Activated naive CD4-positive, alpha-beta T cell treated with anti-CD3 and anti-CD28 coated beads for 36 hours (primary cell): ENCODE measurements at regions of chr3 and their contacts with region 1.

Region 1: GRCh38 chr3:119637679-119638525 is 22.5 kb downstream of the POPDC2 start:
- DNase-seq: peak; percentile 19
- H3K4me3 Mint-ChIP-seq: no peak overlapping the region
- H3K27ac Mint-ChIP-seq: peak overlapping the region; percentile 91
- H3K4me1 Mint-ChIP-seq: peaks cover 36% of the 10 kb centered on the region
- H3K27me3 Mint-ChIP-seq: no peaks in the 10 kb centered on the region

Region 2: GRCh38 chr3:119293871-119294695 is 343.8 kb before region 1 on chr3 and contains the start of gene ARHGAP31:
- CTCF ChIA-PET with region 1: no interaction called
- intact Hi-C with region 1: loop called (anchors 1 kb)
- DNase-seq: peak; percentile 94
- H3K4me3 Mint-ChIP-seq: peak within 1 kb of the TSS; percentile 82
- H3K27ac Mint-ChIP-seq: peak within 1 kb of the TSS; percentile 92
- H3K4me1 Mint-ChIP-seq: peaks cover 36% of the 10 kb centered on the region
- H3K27me3 Mint-ChIP-seq: no peaks in the 10 kb centered on the region
- total RNA-seq, gene ARHGAP31: 3.5 to 3.7 TPM

Region 3: DNA sequence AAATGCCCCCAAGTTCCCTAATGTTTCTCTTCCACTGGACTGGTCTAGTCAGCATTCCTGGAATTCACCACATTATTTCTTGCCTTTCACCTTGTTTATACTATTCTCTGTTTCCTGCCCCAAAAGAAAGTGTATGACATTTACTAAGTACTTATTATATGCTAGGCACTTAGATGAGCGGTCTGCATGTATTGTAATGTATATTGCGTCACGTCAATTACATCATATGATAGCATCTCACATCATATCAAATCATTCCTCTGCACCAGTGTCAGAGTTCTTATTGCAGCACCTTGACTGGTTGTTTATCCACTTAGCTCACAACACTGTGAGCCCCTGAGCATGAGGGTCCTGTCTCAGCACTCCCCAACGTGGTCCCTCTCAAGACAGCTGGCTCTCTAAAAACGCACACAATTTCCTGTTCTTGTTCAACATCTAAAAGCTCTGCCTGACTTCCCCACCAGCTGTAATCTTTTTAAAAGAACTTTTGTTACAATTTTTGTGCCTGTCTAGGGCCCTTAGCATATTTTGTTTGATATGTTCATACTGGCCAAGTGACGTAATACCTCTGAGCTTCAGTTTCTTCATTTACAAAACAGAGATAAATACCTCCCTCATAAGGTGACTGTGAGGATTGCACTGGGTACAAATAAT is 284.9 kb before region 1 on chr3:
- CTCF ChIA-PET with region 1: no interaction called
- intact Hi-C with region 1: loop called (anchors 2 kb)
- DNase-seq: peak; percentile 13
- H3K4me3 Mint-ChIP-seq: no peak overlapping the region
- H3K27ac Mint-ChIP-seq: peak overlapping the region; percentile 43
- H3K4me1 Mint-ChIP-seq: peaks cover 30% of the 10 kb centered on the region
- H3K27me3 Mint-ChIP-seq: no peaks in the 10 kb centered on the region

Region 4: DNA sequence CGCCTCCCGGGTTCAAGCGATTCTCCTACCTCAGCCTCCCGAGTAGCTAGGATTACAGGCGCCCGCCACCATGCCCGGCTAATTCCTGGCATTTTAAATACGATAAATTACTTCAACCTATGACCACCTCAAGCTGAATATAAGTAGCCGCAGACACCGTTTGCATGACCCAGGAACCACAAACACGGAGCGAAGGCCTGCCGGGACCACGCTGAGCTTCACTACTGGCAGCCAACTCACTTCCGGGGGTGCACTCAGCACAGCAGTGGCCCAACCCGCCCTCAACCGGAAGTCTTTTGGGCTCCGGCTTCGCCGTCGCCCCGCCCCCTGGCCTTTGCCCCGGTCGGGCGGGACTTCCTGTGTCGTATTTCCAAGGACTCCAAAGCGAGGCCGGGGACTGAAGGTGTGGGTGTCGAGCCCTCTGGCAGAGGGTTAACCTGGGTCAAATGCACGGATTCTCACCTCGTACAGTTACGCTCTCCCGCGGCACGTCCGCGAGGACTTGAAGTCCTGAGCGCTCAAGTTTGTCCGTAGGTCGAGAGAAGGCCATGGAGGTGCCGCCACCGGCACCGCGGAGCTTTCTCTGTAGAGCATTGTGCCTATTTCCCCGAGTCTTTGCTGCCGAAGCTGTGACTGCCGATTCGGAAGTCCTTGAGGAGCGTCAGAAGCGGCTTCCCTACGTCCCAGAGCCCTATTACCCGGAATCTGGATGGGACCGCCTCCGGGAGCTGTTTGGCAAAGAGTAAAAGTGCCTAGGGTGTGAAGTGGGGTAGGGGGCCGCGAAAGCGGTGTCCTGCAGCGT is 139.5 kb before region 1 on chr3 and contains the start of gene TIMMDC1:
- CTCF ChIA-PET with region 1: no interaction called
- intact Hi-C with region 1: loop called (anchors 1 kb)
- DNase-seq: peak; percentile 98
- H3K4me3 Mint-ChIP-seq: peak within 1 kb of the TSS; percentile 99
- H3K27ac Mint-ChIP-seq: peak within 1 kb of the TSS; percentile 94
- H3K4me1 Mint-ChIP-seq: peaks cover 37% of the 10 kb centered on the region
- H3K27me3 Mint-ChIP-seq: no peaks in the 10 kb centered on the region
- total RNA-seq, gene TIMMDC1: 75.6 to 83.8 TPM

Region 5: GRCh38 chr3:119600732-119601131 is 37.2 kb before region 1 on chr3:
- CTCF ChIA-PET with region 1: no interaction called
- intact Hi-C with region 1: loop called (anchors 2 kb)
- DNase-seq: peak; percentile 59
- H3K4me3 Mint-ChIP-seq: no peak overlapping the region
- H3K27ac Mint-ChIP-seq: no peak overlapping the region
- H3K4me1 Mint-ChIP-seq: peaks cover 3% of the 10 kb centered on the region
- H3K27me3 Mint-ChIP-seq: no peaks in the 10 kb centered on the region

Region 6: DNA sequence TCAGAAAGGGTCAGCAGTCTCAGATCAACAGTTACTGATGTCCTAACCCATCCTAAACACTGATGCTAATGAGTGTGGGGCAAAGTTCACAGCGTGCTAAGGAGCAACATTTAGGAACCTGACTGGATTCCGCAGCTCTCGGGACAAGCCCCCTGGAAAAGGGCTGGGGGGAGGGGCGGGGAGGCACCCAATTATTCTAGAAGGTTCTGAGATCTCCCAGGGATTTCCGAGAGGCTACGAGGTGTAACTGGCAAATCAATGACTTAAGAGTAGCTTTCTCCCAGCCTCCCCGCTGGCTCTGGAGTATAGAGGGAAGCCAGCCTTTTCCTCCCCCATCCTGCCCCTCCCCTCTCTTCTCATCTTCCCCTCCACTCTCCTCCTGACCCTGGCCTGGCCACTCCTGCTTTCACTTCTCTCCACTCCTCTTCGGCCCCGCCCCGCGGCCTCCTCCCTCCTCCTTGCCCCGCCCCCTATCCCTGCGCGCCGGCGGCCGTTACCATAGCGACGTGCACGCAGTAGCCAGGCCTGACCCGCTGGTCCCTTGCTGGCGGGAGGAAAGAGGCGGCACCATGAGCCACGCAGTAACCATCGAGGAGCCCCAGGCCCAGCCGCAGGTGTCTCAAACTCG is 64.7 kb after region 1 on chr3 and contains the start of gene CFAP91:
- CTCF ChIA-PET with region 1: no interaction called
- intact Hi-C with region 1: loop called (anchors 1 kb)
- DNase-seq: peak; percentile 83
- H3K4me3 Mint-ChIP-seq: peak within 1 kb of the TSS; percentile 72
- H3K27ac Mint-ChIP-seq: no peak within 1 kb of the TSS
- H3K4me1 Mint-ChIP-seq: peaks cover 45% of the 10 kb centered on the region
- H3K27me3 Mint-ChIP-seq: peaks cover 2% of the 10 kb centered on the region
- total RNA-seq, gene CFAP91: 0.26 to 0.57 TPM